PC-3 (cell line): ENCODE measurements at regions of chr13 and their contacts with region 1.

Region 1: GRCh38 chr13:39942552-39943273 is 287.3 kb downstream of the COG6 start:
- DNase-seq: peak; percentile 85
- ATAC-seq: peak; percentile 99
- H3K4me3 ChIP-seq: no peak overlapping the region
- H3K27ac ChIP-seq: no peak overlapping the region
- H3K4me1 ChIP-seq: no peaks in the 10 kb centered on the region
- H3K27me3 ChIP-seq: no peaks in the 10 kb centered on the region
- CTCF ChIP-seq: peak; percentile 97

Region 2: DNA sequence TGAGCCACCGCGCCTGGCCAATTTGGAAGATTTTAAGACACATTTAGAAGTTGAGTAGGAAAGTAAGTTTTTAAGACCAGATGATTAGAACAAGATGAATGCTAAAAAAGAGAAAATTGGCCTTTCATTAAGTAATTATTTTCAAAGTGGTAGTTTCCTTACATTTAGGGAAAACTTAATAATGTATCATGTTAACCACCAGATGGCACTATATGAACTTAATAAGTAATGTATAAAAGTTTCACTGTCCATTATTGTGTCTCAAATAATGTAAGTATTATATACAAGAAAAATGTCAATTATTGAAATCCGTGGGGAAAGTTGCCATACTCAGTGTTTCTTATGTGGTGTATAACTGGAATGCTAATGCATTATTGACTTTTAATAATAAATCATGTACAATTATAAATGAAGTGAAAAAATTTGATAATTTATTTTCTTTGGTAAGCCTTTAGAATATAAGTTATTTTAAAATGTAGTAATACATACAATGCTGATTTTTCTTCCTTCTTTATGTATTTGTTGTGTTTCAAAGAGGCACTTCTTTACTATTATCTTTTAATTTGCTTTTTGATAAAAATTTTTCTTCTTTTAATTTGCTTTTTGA is 258.1 kb before region 1 on chr13:
- CTCF ChIA-PET with region 1: no interaction called
- POLR2A ChIA-PET with region 1: no interaction called
- intact Hi-C with region 1: loop called (anchors 5 kb)
- DNase-seq: peak; percentile 54
- ATAC-seq: no peak
- H3K4me3 ChIP-seq: no peak overlapping the region
- H3K27ac ChIP-seq: no peak overlapping the region
- H3K4me1 ChIP-seq: no peaks in the 10 kb centered on the region
- H3K27me3 ChIP-seq: no peaks in the 10 kb centered on the region
- CTCF ChIP-seq: peak; percentile 55

Region 3: DNA sequence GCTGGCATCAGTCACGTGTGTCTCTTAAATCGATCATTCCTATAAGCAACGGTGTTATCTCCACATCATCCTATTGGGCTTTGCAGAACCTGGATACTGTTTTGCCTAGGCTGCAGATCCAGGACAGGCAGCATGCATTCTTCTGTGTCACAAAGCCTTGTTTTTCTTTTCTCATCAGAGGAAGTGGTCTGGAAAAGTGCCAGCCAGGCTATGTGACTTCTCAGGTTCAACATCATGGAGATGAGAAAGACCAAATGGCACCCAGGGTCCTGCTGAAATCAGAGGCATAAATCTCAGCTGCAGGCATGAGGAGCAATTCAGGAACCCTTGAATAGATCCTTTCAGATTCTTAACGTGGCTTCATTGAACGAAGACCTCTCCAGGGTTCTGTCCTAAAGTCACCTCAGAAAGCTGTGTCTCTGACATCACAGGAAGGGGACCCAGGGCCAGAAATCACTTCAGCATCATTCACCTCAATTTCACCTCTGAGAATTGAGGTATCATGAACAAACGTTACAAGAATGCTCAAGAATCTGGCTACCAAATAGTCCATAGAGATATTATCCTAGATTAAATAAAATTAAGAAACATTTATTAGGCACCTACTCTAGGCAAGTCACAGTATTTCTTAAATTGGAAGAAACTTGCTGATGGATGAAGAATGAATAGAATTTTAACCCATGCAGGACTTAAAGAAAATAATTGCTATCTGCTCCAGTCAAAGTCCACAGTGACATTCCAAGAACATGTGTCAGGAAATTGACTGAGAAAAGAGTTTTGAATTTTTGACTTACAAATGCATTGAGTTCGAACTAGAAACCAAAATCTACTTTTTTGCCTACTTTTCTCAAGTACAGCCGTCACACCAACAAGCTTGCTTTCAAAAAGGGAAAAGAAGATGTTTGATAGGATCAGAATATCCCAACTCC is 163.1 kb before region 1 on chr13:
- CTCF ChIA-PET with region 1: interaction called, 3 read pairs
- POLR2A ChIA-PET with region 1: no interaction called
- intact Hi-C with region 1: loop called (anchors 5 kb)
- DNase-seq: peak; percentile 39
- ATAC-seq: no peak
- H3K4me3 ChIP-seq: no peak overlapping the region
- H3K27ac ChIP-seq: no peak overlapping the region
- H3K4me1 ChIP-seq: peaks cover 26% of the 10 kb centered on the region
- H3K27me3 ChIP-seq: no peaks in the 10 kb centered on the region
- CTCF ChIP-seq: no peak